Dendritic cell treated with granulocyte-macrophage colony-stimulating factor and Interleukin-4, amounts not matched to agents 40 ng/mL and 50 ng/mL, for 4 days (primary cell): ENCODE measurements at regions of chr18 and their contacts with region 1.

Region 1: DNA sequence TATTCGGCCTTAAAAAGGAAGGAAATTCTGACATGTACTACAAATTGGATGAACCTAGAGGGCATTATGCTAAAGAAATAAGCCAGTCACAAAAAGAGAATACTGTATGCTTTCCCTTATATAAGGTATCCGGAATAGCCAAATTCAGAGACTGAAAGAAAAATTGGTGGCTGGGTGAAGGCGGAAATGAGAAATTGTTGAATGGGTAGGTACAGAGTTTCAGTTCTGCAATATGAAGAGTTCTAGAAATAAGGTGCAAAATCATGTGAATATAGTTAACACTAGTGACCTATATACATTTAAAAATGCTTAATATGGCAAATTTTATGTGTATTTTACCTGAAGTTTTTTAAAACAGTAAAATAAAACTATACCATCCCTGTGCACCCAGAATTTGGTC is 43.1 kb downstream of the RMP24 start:
- H3K4me3 Mint-ChIP-seq: no peak overlapping the region
- H3K27ac Mint-ChIP-seq: no peak overlapping the region
- H3K4me1 Mint-ChIP-seq: no peaks in the 10 kb centered on the region
- H3K27me3 Mint-ChIP-seq: no peaks in the 10 kb centered on the region

Region 2: DNA sequence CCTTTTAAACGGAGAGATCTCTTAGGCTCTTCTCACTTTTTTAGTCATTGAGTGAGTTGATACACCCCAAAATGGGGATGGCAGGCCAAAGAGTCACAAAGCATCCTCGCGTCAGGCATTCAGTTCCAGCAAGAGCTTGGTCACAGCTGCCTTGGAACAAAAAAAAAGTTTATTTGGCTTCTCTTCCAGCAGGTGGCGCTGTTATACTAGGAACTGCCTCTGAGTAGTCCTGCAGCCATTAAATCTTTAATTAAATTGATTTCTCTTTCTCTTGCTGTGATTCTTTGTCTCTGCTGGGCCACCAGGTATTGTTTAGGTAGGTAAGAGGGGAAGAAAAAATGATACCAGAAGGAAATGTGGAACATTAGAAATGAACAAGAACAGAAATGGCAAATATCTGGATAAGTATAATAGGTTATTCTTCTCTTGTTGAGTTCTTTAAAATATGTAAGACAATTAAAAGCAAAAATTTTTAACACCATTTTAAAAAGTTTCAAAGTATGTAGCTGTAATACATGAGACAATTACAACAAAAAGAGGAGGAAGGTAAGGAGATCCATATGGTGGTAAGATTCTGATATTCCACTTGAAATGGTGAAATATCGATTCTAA is 259.0 kb before region 1 on chr18:
- intact Hi-C with region 1: loop called (anchors 5 kb)
- H3K4me3 Mint-ChIP-seq: no peak overlapping the region
- H3K27ac Mint-ChIP-seq: no peak overlapping the region
- H3K4me1 Mint-ChIP-seq: peaks cover 6% of the 10 kb centered on the region
- H3K27me3 Mint-ChIP-seq: peaks cover 1% of the 10 kb centered on the region

Region 3: GRCh38 chr18:36095936-36096519 is 80.4 kb after region 1 on chr18:
- intact Hi-C with region 1: loop called (anchors 2 kb)
- H3K4me3 Mint-ChIP-seq: no peak overlapping the region
- H3K27ac Mint-ChIP-seq: no peak overlapping the region
- H3K4me1 Mint-ChIP-seq: no peaks in the 10 kb centered on the region
- H3K27me3 Mint-ChIP-seq: peaks cover 4% of the 10 kb centered on the region

Region 4: DNA sequence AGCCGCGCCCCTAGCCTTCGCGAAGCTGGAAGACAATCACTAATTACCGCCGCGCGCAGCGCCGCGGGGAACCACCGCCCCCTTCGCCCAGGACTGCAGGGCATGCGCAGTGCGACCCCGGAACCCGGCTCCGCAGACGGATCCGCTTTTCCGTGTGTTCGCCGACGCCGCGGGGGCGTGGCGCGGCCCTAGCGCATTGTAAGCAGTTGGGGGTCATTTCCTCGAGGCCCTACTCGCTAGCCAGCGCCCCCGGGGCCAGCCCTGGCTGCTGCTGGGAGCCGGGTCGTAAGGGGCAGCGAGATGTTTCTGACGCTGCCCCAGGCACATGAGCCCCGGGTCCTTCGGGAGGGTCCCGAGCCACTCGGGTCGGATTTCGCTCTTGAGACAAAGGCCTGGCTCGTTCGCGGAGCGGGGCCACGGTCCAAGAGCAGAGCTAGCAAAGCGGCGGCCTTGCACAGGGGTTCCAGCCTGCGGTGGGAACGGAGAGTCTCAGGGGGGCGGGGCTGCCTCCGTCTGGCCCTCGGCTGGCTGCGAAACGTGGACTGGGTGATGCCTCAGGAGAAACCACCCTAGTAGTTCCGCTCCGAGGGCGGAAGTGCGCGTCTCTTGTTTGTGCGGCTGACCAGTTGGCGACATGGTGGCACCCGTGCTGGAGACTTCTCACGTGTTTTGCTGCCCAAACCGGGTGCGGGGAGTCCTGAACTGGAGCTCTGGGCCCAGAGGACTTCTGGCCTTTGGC is 113.8 kb after region 1 on chr18 and contains the starts of genes ELP2 and SLC39A6:
- intact Hi-C with region 1: loop called (anchors 10 kb)
- H3K4me3 Mint-ChIP-seq: peak within 1 kb of the TSS; percentile 94
- H3K27ac Mint-ChIP-seq: peak within 1 kb of the TSS; percentile 99
- H3K4me1 Mint-ChIP-seq: peaks cover 40% of the 10 kb centered on the region
- H3K27me3 Mint-ChIP-seq: no peaks in the 10 kb centered on the region

Region 5: DNA sequence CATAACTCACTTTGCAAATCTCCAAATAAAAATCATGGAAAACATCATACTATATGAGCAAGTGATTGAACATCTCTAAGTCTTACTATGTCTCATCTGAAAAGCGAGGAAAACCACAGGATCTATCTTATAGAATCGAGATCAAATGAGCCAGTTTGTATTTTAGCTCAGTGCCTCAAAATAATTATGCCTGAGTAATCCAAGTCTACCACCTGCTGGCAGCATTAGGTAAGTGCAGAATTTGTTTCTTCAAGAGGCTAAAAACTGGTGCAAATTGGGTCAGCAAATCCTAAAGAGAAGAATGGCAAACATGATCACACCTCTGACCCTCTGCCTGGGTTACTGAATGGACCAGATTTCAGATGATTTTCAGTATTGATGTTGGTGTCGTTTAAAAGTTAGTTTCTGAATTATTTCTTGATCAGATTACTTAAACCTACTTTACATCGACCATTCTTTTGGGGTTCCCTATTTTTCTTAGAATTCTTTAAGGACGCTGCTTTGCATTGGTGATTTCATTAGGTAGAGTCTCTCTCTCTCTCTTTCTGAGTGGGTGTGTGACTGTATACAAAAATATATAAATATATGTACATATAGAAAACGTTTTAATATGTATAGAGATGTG is 269.2 kb after region 1 on chr18:
- intact Hi-C with region 1: loop called (anchors 1 kb)
- H3K4me3 Mint-ChIP-seq: no peak overlapping the region
- H3K27ac Mint-ChIP-seq: no peak overlapping the region
- H3K4me1 Mint-ChIP-seq: no peaks in the 10 kb centered on the region
- H3K27me3 Mint-ChIP-seq: peaks cover 22% of the 10 kb centered on the region